Heart left ventricle (tissue), 16 donors: ENCODE measurements at regions of chr12 and their contacts with region 1.

Region 1: DNA sequence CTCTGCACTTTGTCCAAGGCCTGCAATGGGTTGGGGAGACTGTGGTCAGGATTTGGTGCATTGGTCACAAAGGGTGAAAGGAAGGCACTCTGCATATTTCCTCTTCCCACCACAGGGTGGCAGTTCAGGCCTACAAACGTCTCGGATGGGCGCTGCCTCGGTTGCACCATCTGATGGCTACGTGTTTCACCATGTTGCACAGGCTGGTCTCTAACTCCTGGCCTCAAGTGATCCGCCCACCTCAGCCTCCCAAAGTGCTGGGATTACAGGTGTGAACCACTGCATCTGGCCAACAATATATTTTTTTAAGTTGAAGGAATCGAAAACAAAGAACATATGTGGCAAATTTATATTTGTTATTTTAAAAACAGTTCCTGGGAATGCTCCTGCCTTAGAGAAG is 35.1 kb downstream of the TMBIM6 start:
- DNase-seq: peak; percentile 52 to 79 (median 71)
- ATAC-seq: peak; percentile 61 to 94 (median 89)
- H3K4me3 ChIP-seq: no peak overlapping the region
- H3K27ac ChIP-seq: no peak overlapping the region
- H3K4me1 ChIP-seq: peaks cover 0 to 7% (median 0%) of the 10 kb centered on the region in 12 donors
- H3K27me3 ChIP-seq: no peaks in the 10 kb centered on the region
- CTCF ChIP-seq: peak; percentile 63 to 85 (median 80)
- POLR2A ChIP-seq: no peak

Region 2: DNA sequence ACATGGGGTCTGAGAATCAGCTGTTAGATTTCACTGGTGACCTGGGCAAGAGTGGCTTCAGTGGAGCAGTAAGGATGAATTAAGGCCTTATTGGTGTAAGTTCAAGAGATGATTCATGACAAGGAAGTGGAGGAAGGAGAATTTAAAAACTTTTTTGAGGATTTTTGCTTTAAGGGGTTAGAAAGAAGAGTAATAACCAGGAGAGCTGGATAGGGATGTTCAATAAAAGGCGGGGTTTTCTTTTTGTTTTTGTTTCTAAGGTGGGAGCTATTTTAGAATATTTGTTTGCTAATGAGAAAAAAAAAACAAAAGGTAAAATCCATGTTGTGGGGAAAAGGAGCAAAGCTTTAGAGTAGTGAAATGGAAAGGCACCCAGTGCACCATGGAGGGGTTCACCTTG is 630.0 kb before region 1 on chr12:
- intact Hi-C with region 1: no loop called
- DNase-seq: no peak
- ATAC-seq: no peak
- H3K4me3 ChIP-seq: no peak overlapping the region
- H3K27ac ChIP-seq: no peak overlapping the region
- H3K4me1 ChIP-seq: no peaks in the 10 kb centered on the region
- H3K27me3 ChIP-seq: no peaks in the 10 kb centered on the region
- CTCF ChIP-seq: no peak
- POLR2A ChIP-seq: no peak

Region 3: DNA sequence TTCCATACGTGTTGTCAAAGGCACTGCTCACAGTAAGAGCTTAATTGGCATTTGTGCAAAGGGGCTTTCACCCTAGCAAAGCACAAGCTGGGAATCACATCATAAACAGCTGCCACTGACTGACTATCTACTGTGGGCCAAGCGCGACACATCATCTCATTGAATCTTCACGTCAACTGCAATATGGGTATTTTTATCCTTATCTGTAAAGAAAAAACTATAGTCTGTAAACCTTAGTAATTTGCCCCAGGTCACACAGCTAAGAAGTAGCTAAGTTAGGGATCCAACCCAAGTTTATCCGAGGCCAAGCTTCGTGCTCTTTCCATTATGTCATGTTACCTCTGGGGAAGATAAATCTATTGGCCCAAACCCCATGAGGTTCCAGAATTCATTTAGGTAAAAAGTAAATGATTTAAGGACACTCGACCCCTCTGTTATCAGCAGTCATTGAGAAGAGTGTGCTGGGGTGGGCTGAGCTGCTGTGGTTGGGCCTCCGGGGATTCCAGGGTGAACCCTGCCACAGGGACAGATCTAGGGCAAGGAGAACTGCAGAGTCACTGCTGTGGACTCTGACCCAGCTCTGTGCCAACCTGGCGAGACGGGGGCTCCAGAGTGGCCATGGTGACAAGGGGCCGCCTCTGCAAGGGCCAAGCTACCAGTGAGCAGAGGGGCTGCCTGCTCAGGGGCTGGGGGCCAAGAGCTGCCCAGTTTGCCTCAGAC is 24.2 kb after region 1 on chr12:
- intact Hi-C with region 1: loop called in 1 of 10 experiments (anchors 1 kb)
- DNase-seq: no peak
- ATAC-seq: peak; percentile 40 to 73 (median 61)
- H3K4me3 ChIP-seq: no peak overlapping the region
- H3K27ac ChIP-seq: peak overlapping the region in 11 of 12 donors; percentile 17 to 87 (median 69)
- H3K4me1 ChIP-seq: peaks cover 0 to 22% (median 13%) of the 10 kb centered on the region in 12 donors
- H3K27me3 ChIP-seq: no peaks in the 10 kb centered on the region
- CTCF ChIP-seq: no peak
- POLR2A ChIP-seq: no peak